IMR-90 (cell line): ENCODE measurements at regions of chr12 and their contacts with region 1.

Region 1: DNA sequence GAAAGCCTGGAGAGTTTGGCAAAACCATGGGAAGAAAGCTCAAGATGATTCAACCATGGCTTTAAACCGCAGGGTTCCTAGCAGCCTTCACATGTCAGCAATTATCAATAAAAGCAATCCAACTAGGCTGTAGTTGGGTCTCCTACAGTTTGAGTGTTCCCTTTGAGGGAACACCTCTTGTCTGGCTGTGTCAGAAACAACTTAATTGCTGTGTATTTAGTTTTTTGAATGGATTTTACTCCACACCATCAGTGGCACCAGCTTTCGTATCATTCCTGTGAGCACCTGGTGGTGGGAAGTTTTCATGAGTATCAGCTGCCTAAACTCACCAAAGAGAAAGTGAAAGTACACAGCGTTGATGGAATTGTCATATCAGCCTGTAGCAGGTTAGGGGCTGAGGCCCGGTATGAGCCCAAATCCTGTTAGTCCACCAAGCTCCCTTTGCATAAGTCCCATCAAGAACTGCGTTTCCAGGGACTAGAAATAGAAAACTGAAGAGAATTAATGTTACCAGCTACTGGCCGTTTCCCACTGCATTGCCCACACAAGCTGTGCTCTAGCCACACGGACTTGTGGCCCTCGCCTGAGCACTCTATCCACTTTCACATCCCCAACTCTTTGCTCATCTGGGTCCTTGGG is 10.9 kb upstream of the IL26 start:
- DNase-seq: no peak
- ATAC-seq: no peak
- H3K4me3 ChIP-seq: no peak overlapping the region
- H3K27ac ChIP-seq: no peak overlapping the region
- H3K4me1 ChIP-seq: peaks cover 8% of the 10 kb centered on the region
- H3K27me3 ChIP-seq: peaks cover 6% of the 10 kb centered on the region; the same call in 1 of the 2 replicates
- CTCF ChIP-seq: no peak
- POLR2A ChIP-seq: no peak
- RAD21 ChIP-seq: no peak

Region 2: DNA sequence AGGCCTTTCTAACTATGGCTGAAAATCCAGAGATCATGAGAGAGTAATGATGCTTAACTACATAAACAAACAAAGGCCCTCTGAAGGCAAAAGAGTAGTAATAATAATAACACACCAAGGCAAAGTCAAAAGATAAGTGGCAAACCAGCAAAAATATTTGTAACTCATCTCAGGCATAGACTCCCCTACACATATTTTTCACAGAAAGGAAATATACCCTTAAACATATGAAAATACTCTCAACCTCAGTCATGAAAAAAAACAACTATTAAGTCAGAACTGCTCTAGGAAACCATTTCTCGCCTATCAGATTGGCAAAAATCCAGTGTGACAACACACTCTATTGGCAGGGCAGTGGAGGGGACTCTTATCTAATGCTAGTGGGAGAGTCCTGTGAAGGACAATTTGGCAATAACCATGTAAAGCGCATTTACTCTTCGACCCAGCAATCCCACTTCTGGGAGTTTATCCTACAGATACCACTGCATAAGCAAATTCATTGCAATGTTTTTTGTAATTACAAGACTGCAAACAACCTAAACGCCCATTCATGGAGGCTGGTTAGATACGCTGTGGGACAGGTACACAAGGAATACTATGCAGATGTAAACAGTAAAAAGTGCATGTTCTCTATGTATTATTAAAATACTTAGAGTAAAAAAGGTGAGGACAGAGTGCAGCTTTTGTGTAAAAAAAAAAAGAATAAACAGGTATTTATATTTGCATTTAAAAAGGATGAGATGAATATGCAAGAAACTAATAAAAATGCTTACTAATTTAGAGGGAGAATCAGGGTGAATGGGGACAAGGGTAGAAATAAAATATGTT is 42.9 kb after region 1 on chr12:
- CTCF ChIA-PET with region 1: no interaction called
- POLR2A ChIA-PET with region 1: no interaction called
- dilution Hi-C with region 1: no loop called
- in situ Hi-C with region 1: no loop called
- intact Hi-C with region 1: loop called (anchors 2 kb)
- DNase-seq: peak; percentile 28
- ATAC-seq: peak; percentile 40; the same call in 1 of the 2 replicates
- H3K4me3 ChIP-seq: no peak overlapping the region
- H3K27ac ChIP-seq: no peak overlapping the region
- H3K4me1 ChIP-seq: no peaks in the 10 kb centered on the region
- H3K27me3 ChIP-seq: no peaks in the 10 kb centered on the region
- CTCF ChIP-seq: no peak
- POLR2A ChIP-seq: no peak
- RAD21 ChIP-seq: no peak

Region 3: DNA sequence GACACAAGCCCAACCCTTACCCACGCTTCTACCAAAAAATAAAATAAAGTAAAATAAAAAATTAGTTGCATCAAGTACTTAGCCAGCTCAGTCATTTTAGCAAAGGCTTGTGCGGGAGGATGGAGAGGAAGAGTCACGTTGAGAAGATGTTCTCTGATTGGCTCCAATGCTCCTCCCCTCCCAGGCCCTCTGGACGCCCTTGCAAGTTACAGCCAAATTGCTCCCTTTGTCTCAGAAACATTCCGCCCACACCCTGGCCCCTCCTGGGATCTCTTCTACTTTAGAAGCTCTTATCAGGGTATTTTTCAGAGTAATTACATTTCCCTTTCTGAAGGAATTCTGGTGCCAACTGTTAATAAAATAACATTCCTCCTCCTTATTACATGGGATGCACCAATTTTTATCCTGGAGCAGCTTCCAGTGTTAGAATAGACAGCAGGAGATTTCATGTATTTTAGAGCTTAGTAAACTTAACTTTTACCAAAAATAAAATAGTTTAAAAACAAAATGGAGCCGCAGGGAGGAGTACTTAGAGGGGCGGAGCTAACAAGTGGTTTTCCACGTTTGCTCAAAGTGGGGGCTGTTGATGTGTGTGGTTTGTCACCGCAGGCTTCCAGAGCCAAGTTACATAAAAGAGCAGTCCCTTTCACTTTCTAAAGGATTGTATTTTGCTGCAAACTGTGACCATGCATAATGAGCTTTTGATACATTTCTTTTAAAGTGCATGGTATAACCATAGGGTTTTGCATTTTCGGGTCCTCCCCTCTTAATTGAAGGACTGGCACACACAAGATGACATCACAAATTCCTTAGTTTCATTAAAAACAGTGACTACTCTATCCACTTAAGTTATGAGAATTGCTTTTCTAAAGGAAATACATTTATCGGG is 302.4 kb after region 1 on chr12:
- CTCF ChIA-PET with region 1: no interaction called
- POLR2A ChIA-PET with region 1: no interaction called
- dilution Hi-C with region 1: no loop called
- in situ Hi-C with region 1: no loop called
- intact Hi-C with region 1: no loop called
- DNase-seq: peak; percentile 26
- ATAC-seq: peak; percentile 46; the same call in 1 of the 2 replicates
- H3K4me3 ChIP-seq: no peak overlapping the region
- H3K27ac ChIP-seq: no peak overlapping the region
- H3K4me1 ChIP-seq: peaks cover 2% of the 10 kb centered on the region; the same call in 1 of the 2 replicates
- H3K27me3 ChIP-seq: no peaks in the 10 kb centered on the region
- CTCF ChIP-seq: no peak
- POLR2A ChIP-seq: no peak
- RAD21 ChIP-seq: no peak